ENCODE measurements at regions of chr1 and their contacts with region 1.

Region 1: DNA sequence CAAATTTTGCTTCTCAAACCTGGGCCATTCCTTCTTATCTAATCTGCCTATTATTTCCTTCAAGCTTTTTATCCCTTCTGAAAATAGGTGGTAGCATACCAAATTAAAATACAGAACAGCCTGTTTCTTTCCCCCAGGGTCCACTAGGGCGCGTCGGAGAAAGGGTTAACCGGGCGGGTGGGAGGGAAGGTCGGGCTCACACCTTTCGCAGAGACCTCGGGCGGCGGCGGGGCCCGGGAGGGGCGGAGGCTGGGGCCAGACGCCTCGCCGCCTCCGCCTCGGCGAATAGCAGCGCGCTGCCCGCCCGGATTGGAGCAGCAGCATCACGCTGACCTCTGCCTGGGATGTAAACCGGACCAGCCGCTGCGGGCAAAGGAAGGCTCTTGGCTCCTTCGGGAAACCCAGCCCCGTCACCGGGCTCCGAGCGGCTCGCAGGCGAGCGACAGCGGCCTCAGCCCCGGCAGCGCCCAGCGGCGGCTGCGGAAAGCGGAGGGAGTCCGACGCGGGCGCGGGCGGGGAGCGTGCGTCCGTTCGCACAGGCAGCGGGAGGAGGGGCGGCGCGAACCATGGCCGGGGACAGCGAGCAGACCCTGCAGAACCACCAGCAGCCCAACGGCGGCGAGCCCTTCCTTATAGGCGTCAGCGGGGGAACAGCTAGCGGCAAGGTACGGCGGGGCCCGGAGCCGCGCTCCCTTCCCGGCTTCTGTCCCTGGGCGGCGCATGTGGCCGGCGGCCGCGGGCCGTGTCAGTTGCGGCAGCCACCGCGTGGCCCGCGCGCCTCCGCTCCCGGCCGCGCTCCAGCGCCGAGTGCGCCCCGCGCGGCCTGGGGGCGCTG is at the start of gene UCK2:
- DNase-seq: peak; percentile 53 to 69
- ATAC-seq: peak; percentile 72 to 80 (median 76)
- H3K4me3 ChIP-seq: peak within 1 kb of the TSS; percentile 67
- H3K4me3 Mint-ChIP-seq: peak within 1 kb of the TSS; percentile 95
- H3K27ac ChIP-seq: peak within 1 kb of the TSS; percentile 54
- H3K27ac Mint-ChIP-seq: peak within 1 kb of the TSS; percentile 86 to 87
- H3K4me1 ChIP-seq: peaks cover 16% of the 10 kb centered on the region
- H3K4me1 Mint-ChIP-seq: peaks cover 17 to 26% of the 10 kb centered on the region in 2 donors
- H3K27me3 ChIP-seq: no peaks in the 10 kb centered on the region
- H3K27me3 Mint-ChIP-seq: no peaks in the 10 kb centered on the region
- CTCF ChIP-seq: peak; percentile 20
- total RNA-seq, gene UCK2: 12.8 to 20.5 (median 14.4) TPM

Region 2: GRCh38 chr1:165871311-165872067 is 44.0 kb after region 1 on chr1:
- intact Hi-C with region 1: loop called (anchors 10 kb)
- DNase-seq: peak; percentile 33 to 77
- ATAC-seq: peak; percentile 84 to 93 (median 85)
- H3K4me3 ChIP-seq: no peak overlapping the region
- H3K4me3 Mint-ChIP-seq: peak overlapping the region; percentile 40
- H3K27ac ChIP-seq: no peak overlapping the region
- H3K27ac Mint-ChIP-seq: peak overlapping the region; percentile 37 to 66
- H3K4me1 ChIP-seq: peaks cover 20% of the 10 kb centered on the region
- H3K4me1 Mint-ChIP-seq: peaks cover 51 to 70% of the 10 kb centered on the region in 2 donors
- H3K27me3 ChIP-seq: no peaks in the 10 kb centered on the region
- H3K27me3 Mint-ChIP-seq: no peaks in the 10 kb centered on the region
- CTCF ChIP-seq: peak; percentile 9

Region 3: DNA sequence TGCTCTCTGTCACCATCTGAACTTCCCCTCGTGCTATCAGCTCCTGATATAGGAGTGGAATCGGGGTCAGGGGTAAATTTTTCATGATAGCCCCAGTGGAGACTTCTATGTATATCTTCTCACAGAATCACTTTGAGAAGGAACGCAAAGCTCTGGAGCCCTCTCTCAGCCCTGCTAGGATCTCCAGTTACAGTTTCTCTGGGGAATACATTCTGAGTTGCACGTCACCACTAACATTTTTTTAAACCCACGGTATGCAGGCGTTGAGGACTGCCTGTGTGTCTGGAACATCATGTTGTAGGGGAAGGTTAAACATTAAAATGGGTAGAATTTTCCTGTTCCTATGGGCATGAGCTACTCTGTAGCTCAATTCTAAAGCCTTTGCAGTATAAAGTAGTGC is 455.7 kb after region 1 on chr1:
- intact Hi-C with region 1: no loop called
- DNase-seq: no peak
- ATAC-seq: no peak
- H3K4me3 ChIP-seq: no peak overlapping the region
- H3K4me3 Mint-ChIP-seq: no peak overlapping the region
- H3K27ac ChIP-seq: no peak overlapping the region
- H3K27ac Mint-ChIP-seq: no peak overlapping the region
- H3K4me1 ChIP-seq: no peaks in the 10 kb centered on the region
- H3K4me1 Mint-ChIP-seq: no peaks in the 10 kb centered on the region
- H3K27me3 ChIP-seq: no peaks in the 10 kb centered on the region
- H3K27me3 Mint-ChIP-seq: no peaks in the 10 kb centered on the region
- CTCF ChIP-seq: no peak

Measured in natural killer cell (primary cell).